IMR-90 (cell line): ENCODE measurements at regions of chr2 and their contacts with region 1.

Region 1: GRCh38 chr2:65129826-65130663 is at the start of gene RAB1A:
- DNase-seq: peak; percentile 100
- ATAC-seq: peak; percentile 93
- H3K4me3 ChIP-seq: peak within 1 kb of the TSS; percentile 72
- H3K27ac ChIP-seq: peak within 1 kb of the TSS; percentile 96
- H3K4me1 ChIP-seq: peaks cover 5% of the 10 kb centered on the region
- H3K27me3 ChIP-seq: no peaks in the 10 kb centered on the region
- CTCF ChIP-seq: peak; percentile 49
- POLR2A ChIP-seq: peak; percentile 93
- RAD21 ChIP-seq: no peak
- total RNA-seq, gene RAB1A: 114 and 127 TPM in 2 replicates

Region 2: GRCh38 chr2:64839844-64840243 is 290.2 kb before region 1 on chr2:
- CTCF ChIA-PET with region 1: no interaction called
- POLR2A ChIA-PET with region 1: no interaction called
- dilution Hi-C with region 1: no loop called
- in situ Hi-C with region 1: no loop called
- intact Hi-C with region 1: no loop called
- DNase-seq: no peak
- ATAC-seq: no peak
- H3K4me3 ChIP-seq: no peak overlapping the region
- H3K27ac ChIP-seq: peak overlapping the region; percentile 21; the same call in 1 of the 2 replicates
- H3K4me1 ChIP-seq: peaks cover 13% of the 10 kb centered on the region
- H3K27me3 ChIP-seq: no peaks in the 10 kb centered on the region
- CTCF ChIP-seq: no peak
- POLR2A ChIP-seq: no peak
- RAD21 ChIP-seq: no peak

Region 3: GRCh38 chr2:65081232-65081685 is 48.8 kb before region 1 on chr2:
- CTCF ChIA-PET with region 1: no interaction called
- POLR2A ChIA-PET with region 1: no interaction called
- dilution Hi-C with region 1: no loop called
- in situ Hi-C with region 1: no loop called
- intact Hi-C with region 1: loop called (anchors 5 kb)
- DNase-seq: no peak
- ATAC-seq: no peak
- H3K4me3 ChIP-seq: no peak overlapping the region
- H3K27ac ChIP-seq: no peak overlapping the region
- H3K4me1 ChIP-seq: peaks cover 4% of the 10 kb centered on the region
- H3K27me3 ChIP-seq: no peaks in the 10 kb centered on the region
- CTCF ChIP-seq: no peak
- POLR2A ChIP-seq: no peak
- RAD21 ChIP-seq: no peak

Region 4: GRCh38 chr2:65156041-65156440 is 26.0 kb after region 1 on chr2:
- CTCF ChIA-PET with region 1: no interaction called
- POLR2A ChIA-PET with region 1: interaction called, 14 read pairs
- dilution Hi-C with region 1: no loop called
- in situ Hi-C with region 1: no loop called
- intact Hi-C with region 1: no loop called
- DNase-seq: no peak
- ATAC-seq: no peak
- H3K4me3 ChIP-seq: no peak overlapping the region
- H3K27ac ChIP-seq: no peak overlapping the region
- H3K4me1 ChIP-seq: no peaks in the 10 kb centered on the region
- H3K27me3 ChIP-seq: peaks cover 4% of the 10 kb centered on the region
- CTCF ChIP-seq: no peak
- POLR2A ChIP-seq: no peak
- RAD21 ChIP-seq: no peak

Region 5: DNA sequence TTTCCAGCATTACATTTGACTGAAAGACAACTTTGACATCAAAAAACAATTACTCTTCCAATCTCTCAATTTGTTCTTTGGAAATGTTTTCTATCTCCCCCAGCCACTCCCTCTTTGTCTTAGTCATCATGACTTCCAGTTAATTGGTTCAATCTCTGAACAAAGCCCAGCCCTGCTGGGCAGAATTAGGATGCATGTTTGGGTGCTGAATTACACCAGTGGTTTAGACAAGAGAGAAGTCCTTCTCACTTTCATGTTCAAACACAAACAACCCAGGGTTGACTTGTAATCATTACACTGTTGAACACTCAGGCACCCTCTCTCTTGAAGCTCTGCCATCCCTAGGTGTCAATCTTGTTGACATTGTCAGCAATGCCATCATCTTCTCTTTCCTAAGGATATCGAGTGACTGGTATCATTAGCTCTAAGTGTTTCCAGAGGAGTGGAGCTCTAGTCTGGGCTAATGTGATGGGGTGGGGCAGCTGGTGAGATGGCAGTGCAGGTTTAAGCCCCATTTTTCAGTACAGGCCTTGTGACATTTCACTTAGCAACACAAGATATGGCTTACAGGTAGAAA is 1214.1 kb after region 1 on chr2:
- CTCF ChIA-PET with region 1: no interaction called
- POLR2A ChIA-PET with region 1: no interaction called
- dilution Hi-C with region 1: no loop called
- in situ Hi-C with region 1: no loop called
- intact Hi-C with region 1: no loop called
- DNase-seq: no peak
- ATAC-seq: no peak
- H3K4me3 ChIP-seq: no peak overlapping the region
- H3K27ac ChIP-seq: no peak overlapping the region
- H3K4me1 ChIP-seq: no peaks in the 10 kb centered on the region
- H3K27me3 ChIP-seq: peaks cover 1% of the 10 kb centered on the region; the same call in 1 of the 2 replicates
- CTCF ChIP-seq: no peak
- POLR2A ChIP-seq: no peak
- RAD21 ChIP-seq: no peak